Calu3 (cell line): ENCODE measurements at regions of chr1 and their contacts with region 1.

Region 1: DNA sequence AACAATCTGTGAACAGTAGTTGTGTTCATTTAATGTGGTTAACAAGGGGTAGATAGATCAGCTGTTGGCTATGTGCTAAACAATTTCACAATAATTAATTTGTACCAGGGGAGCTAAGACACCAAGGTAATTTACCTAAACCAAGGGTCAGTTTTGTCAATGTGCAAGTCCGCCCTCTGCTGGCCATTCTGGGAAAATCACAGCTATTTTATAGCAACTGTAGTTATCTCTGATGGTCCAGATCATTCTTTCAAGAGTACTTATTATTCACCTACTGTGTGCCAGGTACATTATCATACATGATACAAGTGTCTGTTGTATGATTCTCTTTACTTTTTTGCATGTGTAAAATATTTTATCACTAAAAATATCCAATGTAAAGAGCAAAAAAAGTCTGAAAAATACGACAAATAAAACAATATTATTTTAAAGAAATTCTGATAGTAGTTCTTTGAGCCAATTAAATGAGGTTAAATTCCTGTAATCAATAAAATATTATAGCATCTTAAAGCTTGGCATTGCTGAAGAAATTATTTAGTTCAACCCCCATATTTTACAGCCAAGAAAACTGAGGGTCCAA is 312.3 kb upstream of the FAM78B start:
- DNase-seq: peak; percentile 61
- H3K4me3 Mint-ChIP-seq: no peak overlapping the region
- H3K27ac Mint-ChIP-seq: no peak overlapping the region
- H3K4me1 Mint-ChIP-seq: no peaks in the 10 kb centered on the region
- H3K27me3 Mint-ChIP-seq: no peaks in the 10 kb centered on the region
- CTCF ChIP-seq: peak; percentile 65

Region 2: DNA sequence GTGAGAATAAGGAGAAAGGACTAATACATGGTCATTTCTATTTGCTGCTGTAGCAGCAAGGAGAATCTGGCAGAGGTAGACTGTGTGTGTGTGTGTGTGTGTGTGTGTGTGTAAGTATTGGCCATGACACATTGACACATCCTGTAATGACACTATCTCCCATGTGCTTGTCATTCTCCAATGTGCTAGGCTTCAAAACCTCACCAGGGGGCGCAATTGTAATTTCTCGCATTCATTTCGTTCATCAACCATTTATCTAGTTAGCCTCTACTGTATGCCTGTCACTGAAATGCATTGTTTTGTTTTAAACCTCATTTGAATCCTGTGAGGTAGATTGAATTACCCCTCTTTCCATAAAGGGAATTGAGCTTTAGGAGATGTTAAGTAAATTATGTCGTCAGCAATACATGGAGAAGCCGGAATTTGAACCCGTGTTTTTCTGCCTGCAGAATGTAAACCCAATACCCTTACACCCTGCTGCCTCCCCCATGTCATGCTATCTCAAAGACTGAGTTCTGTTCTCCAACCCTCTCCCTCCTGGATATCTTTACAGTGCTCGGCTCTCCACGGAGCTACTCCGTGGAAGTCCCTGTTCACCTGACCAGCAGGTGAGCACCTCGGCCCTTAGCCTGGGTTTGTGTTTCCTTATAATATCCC is 550.9 kb before region 1 on chr1:
- CTCF ChIA-PET with region 1: interaction called, 22 read pairs
- intact Hi-C with region 1: loop called (anchors 1 kb)
- DNase-seq: peak; percentile 72
- H3K4me3 Mint-ChIP-seq: no peak overlapping the region
- H3K27ac Mint-ChIP-seq: no peak overlapping the region
- H3K4me1 Mint-ChIP-seq: no peaks in the 10 kb centered on the region
- H3K27me3 Mint-ChIP-seq: no peaks in the 10 kb centered on the region
- CTCF ChIP-seq: peak; percentile 60

Region 3: DNA sequence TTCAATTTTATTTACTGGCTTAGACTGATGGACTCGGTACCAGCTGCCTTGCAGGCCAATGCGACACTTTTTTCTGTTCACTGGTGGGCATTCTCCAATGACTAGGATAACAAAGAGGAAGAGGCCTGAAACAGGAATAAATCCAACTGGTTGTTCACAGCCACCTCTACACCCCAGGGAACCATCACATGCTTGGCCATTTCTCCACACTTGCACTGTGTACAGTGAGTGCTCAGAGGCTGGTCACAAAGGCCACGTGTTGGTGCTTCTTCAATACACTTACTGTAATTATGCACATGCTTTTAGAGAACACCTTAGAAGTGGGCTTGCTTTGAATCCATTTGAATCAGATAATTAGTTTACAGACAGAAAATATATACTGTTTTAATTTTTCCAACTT is 425.7 kb before region 1 on chr1:
- CTCF ChIA-PET with region 1: no interaction called
- intact Hi-C with region 1: loop called (anchors 5 kb)
- DNase-seq: no peak
- H3K4me3 Mint-ChIP-seq: no peak overlapping the region
- H3K27ac Mint-ChIP-seq: no peak overlapping the region
- H3K4me1 Mint-ChIP-seq: no peaks in the 10 kb centered on the region
- H3K27me3 Mint-ChIP-seq: peaks cover 92% of the 10 kb centered on the region
- CTCF ChIP-seq: no peak

Region 4: DNA sequence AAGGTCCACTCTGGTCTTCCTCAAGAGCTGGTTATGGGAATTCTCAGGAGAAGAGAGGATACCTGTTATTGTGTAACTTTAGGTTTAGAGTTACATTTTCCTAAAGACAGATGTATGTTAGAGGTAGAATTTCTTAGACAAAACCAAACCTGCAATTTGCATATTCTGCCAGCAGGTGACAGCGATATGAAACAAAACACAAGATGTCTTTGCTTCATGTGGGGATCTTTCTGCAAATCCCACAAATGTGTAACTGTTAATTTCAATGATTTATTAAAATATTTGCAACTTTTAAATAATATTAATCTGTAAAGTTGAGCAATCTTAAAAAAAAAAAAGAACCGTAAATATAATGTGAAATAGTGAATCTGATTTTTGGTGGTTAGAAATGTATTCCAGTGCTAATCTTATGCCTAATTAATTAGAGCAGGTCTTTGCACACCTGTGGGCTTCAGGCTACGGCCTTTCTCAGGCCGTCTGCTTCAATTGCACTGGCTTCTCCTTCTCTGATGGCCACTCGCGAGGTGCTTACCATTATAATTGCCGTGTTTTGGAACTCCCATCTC is 345.8 kb before region 1 on chr1:
- CTCF ChIA-PET with region 1: no interaction called
- intact Hi-C with region 1: loop called (anchors 1 kb)
- DNase-seq: peak; percentile 12
- H3K4me3 Mint-ChIP-seq: no peak overlapping the region
- H3K27ac Mint-ChIP-seq: no peak overlapping the region
- H3K4me1 Mint-ChIP-seq: no peaks in the 10 kb centered on the region
- H3K27me3 Mint-ChIP-seq: no peaks in the 10 kb centered on the region
- CTCF ChIP-seq: peak; percentile 54

Region 5: DNA sequence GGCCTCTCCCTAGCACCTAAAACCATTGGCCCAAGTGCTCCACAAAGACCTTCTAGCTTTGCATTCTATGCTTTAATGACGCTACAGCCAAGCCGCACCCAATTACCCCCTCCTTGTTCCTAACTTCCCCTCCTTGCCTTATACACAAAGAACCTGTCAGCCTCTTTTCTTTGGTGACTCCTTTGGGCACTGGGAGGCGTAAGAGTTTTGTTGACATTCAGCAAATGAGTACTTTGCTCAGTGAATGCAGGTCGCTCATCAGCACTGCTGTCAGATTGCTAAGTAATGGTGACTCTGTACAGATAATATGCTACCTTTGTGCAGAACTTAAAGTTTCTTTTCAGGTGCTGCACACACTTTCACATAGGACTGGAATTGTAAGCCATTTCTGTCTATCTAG is 124.7 kb before region 1 on chr1:
- CTCF ChIA-PET with region 1: no interaction called
- intact Hi-C with region 1: no loop called
- DNase-seq: no peak
- H3K4me3 Mint-ChIP-seq: no peak overlapping the region
- H3K27ac Mint-ChIP-seq: no peak overlapping the region
- H3K4me1 Mint-ChIP-seq: no peaks in the 10 kb centered on the region
- H3K27me3 Mint-ChIP-seq: peaks cover 10% of the 10 kb centered on the region
- CTCF ChIP-seq: no peak

Region 6: GRCh38 chr1:166395729-166396128 is 83.4 kb before region 1 on chr1:
- CTCF ChIA-PET with region 1: no interaction called
- intact Hi-C with region 1: no loop called
- DNase-seq: no peak
- H3K4me3 Mint-ChIP-seq: no peak overlapping the region
- H3K27ac Mint-ChIP-seq: no peak overlapping the region
- H3K4me1 Mint-ChIP-seq: no peaks in the 10 kb centered on the region
- H3K27me3 Mint-ChIP-seq: peaks cover 13% of the 10 kb centered on the region
- CTCF ChIP-seq: no peak

Region 7: DNA sequence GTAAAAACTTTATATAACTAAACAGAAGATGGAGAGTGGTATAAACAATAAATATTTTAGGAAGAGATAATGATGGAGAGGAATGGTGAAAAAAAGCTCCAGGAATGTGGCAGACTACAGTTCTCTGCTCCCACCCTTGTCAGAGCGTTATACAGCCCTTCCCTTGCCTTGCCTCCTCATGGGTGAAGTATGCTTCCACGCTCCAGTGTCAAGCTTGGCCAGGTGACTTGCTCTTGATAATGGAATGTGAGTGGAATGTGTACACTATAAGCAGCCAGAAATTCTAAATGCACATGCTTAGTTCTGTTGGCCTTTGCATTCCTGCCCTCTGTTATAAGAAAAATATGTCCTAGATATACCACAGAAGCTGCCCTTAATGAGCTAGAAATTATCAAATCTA is 335.5 kb after region 1 on chr1:
- CTCF ChIA-PET with region 1: interaction called, 4 read pairs
- intact Hi-C with region 1: loop called (anchors 1 kb)
- DNase-seq: no peak
- H3K4me3 Mint-ChIP-seq: no peak overlapping the region
- H3K27ac Mint-ChIP-seq: no peak overlapping the region
- H3K4me1 Mint-ChIP-seq: peaks cover 18% of the 10 kb centered on the region
- H3K27me3 Mint-ChIP-seq: no peaks in the 10 kb centered on the region
- CTCF ChIP-seq: no peak

Region 8: DNA sequence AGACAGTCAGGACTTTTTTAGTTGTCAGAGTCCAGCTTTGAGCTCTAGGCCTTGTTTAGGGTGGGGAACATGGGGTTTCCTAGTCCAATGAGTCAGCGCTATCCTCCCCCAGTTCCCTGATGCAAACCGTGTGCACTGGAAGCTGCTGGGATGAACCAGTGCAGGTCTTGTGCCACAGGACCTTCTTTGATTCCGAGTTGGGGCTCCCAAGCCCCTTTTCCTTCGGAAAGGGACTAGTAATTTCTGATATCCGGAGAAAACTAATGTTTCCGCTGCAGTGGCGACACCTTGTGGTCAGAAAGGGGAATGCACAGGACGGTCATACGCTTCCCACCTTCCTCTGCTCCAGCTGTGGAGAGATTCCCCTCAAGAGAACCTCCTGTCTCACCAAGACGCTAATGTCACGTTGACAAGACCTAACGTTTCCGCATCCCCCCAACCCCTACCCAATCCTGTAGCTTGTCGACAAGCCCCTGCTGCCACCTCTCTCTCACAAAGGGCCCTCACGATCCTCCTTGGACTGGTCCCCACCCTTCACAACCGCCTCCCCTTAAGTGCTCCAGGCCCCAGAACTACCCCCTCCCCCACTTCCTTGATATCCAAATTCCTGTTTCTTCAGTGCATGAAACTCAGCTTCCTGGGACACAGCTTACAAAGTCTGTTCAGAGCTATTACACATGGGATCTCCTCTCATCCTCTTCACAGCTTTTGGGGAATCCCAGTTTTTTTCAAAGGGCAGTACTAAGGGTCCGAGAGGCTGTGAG is 580.1 kb after region 1 on chr1:
- CTCF ChIA-PET with region 1: no interaction called
- intact Hi-C with region 1: loop called (anchors 5 kb)
- DNase-seq: peak; percentile 83
- H3K4me3 Mint-ChIP-seq: no peak overlapping the region
- H3K27ac Mint-ChIP-seq: no peak overlapping the region
- H3K4me1 Mint-ChIP-seq: peaks cover 17% of the 10 kb centered on the region
- H3K27me3 Mint-ChIP-seq: no peaks in the 10 kb centered on the region
- CTCF ChIP-seq: peak; percentile 93